PC-3 (cell line): ENCODE measurements at regions of chr1 and their contacts with region 1.

Region 1: GRCh38 chr1:20493839-20494608 is 8.0 kb upstream of the CAMK2N1 start:
- DNase-seq: peak; percentile 97
- ATAC-seq: peak; percentile 57
- H3K4me3 ChIP-seq: no peak overlapping the region
- H3K27ac ChIP-seq: peak overlapping the region; percentile 98
- H3K4me1 ChIP-seq: peaks cover 47% of the 10 kb centered on the region
- H3K27me3 ChIP-seq: no peaks in the 10 kb centered on the region
- CTCF ChIP-seq: peak; percentile 95

Region 2: GRCh38 chr1:19918057-19918456 is 576.0 kb before region 1 on chr1:
- CTCF ChIA-PET with region 1: interaction called, 4 read pairs
- POLR2A ChIA-PET with region 1: no interaction called
- intact Hi-C with region 1: loop called (anchors 10 kb)
- DNase-seq: peak; percentile 89
- ATAC-seq: peak; percentile 74
- H3K4me3 ChIP-seq: no peak overlapping the region
- H3K27ac ChIP-seq: no peak overlapping the region
- H3K4me1 ChIP-seq: no peaks in the 10 kb centered on the region
- H3K27me3 ChIP-seq: no peaks in the 10 kb centered on the region
- CTCF ChIP-seq: peak; percentile 96

Region 3: DNA sequence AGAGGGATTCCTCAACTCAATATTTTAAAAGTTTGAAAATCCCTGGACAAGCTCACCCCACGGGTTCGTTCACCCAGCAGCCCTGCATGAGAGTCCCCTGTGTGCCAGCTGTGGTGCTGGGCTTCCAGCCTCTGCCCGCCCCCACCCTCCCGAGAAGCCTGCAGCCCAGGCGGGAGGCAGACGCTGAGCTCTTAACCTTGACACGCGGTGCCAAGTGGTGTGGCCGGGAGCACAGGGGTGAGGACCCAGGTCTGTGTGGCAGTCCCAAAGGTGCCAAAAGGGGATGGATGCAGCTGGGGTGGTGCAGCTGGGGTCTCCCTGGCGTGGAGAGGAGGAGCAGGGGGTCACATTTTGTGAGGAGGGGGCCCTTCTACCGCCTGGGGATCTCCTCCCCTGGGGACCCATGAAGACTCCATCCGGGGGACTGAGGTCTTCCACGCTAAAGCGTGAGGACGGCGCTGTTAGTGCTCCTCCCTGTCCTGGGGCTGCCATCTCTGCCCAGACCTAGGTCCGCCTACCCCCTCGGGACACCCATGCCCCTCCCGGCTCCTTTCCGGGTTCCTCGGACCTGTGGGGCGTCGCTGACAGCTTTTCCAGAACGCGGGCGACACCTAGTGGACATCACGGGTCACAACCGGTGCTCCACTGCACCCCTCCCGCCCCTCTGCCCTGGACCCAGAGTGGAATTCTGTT is 342.0 kb before region 1 on chr1:
- CTCF ChIA-PET with region 1: no interaction called
- POLR2A ChIA-PET with region 1: no interaction called
- intact Hi-C with region 1: loop called (anchors 5 kb)
- DNase-seq: peak; percentile 80
- ATAC-seq: peak; percentile 95
- H3K4me3 ChIP-seq: peak overlapping the region; percentile 66
- H3K27ac ChIP-seq: no peak overlapping the region
- H3K4me1 ChIP-seq: 0 out of 2 replicates have a peak, but pooled peaks cover 5% of the 10 kb centered on the region
- H3K27me3 ChIP-seq: no peaks in the 10 kb centered on the region
- CTCF ChIP-seq: peak; percentile 89

Region 4: GRCh38 chr1:20237646-20238045 is 256.4 kb before region 1 on chr1:
- CTCF ChIA-PET with region 1: interaction called, 4 read pairs
- POLR2A ChIA-PET with region 1: no interaction called
- intact Hi-C with region 1: loop called (anchors 1 kb)
- DNase-seq: no peak
- ATAC-seq: no peak
- H3K4me3 ChIP-seq: no peak overlapping the region
- H3K27ac ChIP-seq: no peak overlapping the region
- H3K4me1 ChIP-seq: peaks cover 35% of the 10 kb centered on the region
- H3K27me3 ChIP-seq: no peaks in the 10 kb centered on the region
- CTCF ChIP-seq: no peak

Region 5: GRCh38 chr1:20430355-20431175 is 63.5 kb before region 1 on chr1:
- CTCF ChIA-PET with region 1: interaction called, 20 read pairs
- POLR2A ChIA-PET with region 1: no interaction called
- intact Hi-C with region 1: loop called (anchors 2 kb)
- DNase-seq: peak; percentile 47
- ATAC-seq: peak; percentile 47; the same call in 1 of the 2 replicates
- H3K4me3 ChIP-seq: no peak overlapping the region
- H3K27ac ChIP-seq: no peak overlapping the region
- H3K4me1 ChIP-seq: peaks cover 13% of the 10 kb centered on the region
- H3K27me3 ChIP-seq: no peaks in the 10 kb centered on the region
- CTCF ChIP-seq: peak; percentile 94